T-cell (primary cell): ENCODE measurements at regions of chrX and their contacts with region 1.

Region 1: GRCh38 chrX:106919932-106920452 is at the start of gene CLDN2:
- DNase-seq: no peak
- ATAC-seq: no peak
- H3K4me3 ChIP-seq: no peak within 1 kb of the TSS
- H3K4me3 Mint-ChIP-seq: no peak within 1 kb of the TSS
- H3K27ac ChIP-seq: no peak within 1 kb of the TSS
- H3K27ac Mint-ChIP-seq: no peak within 1 kb of the TSS
- H3K4me1 ChIP-seq: peaks cover 0 to 15% of the 10 kb centered on the region in 2 experiments
- H3K4me1 Mint-ChIP-seq: peaks cover 20 to 26% (median 25%) of the 10 kb centered on the region in 3 donors
- H3K27me3 ChIP-seq: peaks cover 0 to under 1% of the 10 kb centered on the region in 2 experiments
- H3K27me3 Mint-ChIP-seq: peaks cover 6 to 11% of the 10 kb centered on the region in 2 donors
- total RNA-seq, gene CLDN2: 0.07 to 0.13 TPM in 2 of 5 donors, not detected in the others

Region 2: DNA sequence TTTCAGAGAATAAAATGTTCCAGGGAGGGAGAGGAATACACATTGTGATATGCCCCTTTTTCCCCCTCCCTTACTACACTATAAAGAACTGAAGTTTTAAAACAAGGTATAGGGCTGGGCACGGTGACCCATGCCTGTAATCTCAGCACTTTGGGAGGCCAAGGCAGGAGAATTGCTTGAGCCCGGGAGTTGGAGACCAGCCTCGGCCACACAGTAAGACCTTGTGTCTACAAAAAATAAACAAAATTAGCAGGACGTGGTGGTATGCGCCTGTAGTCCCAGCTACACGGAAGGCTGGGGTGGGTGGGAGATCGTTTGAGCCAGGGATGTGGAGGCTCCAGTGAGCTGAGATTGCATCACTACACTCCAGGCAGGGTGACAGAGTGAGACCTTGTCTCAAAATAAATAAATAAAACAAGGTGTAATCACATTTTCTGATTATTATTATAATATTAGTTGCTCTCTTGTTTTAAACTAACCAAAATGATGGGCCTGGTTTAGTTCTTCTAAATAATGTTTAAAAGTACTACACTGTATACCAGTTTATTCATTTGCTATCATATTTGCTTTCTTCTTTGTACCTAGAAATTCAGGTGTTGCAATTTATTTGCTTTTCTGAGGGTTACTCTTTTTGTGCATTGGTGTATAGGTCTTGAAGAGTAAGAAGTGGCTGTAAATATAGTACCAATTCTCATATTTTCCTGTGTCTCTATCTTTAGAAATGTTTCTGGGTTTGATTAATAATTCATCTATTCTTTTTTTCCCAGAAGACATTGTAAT is 108.7 kb before region 1 on chrX:
- CTCF ChIA-PET with region 1: no interaction called
- POLR2A ChIA-PET with region 1: no interaction called
- DNase-seq: no peak
- ATAC-seq: no peak
- H3K4me3 ChIP-seq: no peak overlapping the region
- H3K4me3 Mint-ChIP-seq: no peak overlapping the region
- H3K27ac ChIP-seq: no peak overlapping the region
- H3K27ac Mint-ChIP-seq: no peak overlapping the region
- H3K4me1 ChIP-seq: no peaks in the 10 kb centered on the region
- H3K4me1 Mint-ChIP-seq: no peaks in the 10 kb centered on the region
- H3K27me3 ChIP-seq: no peaks in the 10 kb centered on the region
- H3K27me3 Mint-ChIP-seq: peaks cover 4 to 36% of the 10 kb centered on the region in 2 donors

Region 3: DNA sequence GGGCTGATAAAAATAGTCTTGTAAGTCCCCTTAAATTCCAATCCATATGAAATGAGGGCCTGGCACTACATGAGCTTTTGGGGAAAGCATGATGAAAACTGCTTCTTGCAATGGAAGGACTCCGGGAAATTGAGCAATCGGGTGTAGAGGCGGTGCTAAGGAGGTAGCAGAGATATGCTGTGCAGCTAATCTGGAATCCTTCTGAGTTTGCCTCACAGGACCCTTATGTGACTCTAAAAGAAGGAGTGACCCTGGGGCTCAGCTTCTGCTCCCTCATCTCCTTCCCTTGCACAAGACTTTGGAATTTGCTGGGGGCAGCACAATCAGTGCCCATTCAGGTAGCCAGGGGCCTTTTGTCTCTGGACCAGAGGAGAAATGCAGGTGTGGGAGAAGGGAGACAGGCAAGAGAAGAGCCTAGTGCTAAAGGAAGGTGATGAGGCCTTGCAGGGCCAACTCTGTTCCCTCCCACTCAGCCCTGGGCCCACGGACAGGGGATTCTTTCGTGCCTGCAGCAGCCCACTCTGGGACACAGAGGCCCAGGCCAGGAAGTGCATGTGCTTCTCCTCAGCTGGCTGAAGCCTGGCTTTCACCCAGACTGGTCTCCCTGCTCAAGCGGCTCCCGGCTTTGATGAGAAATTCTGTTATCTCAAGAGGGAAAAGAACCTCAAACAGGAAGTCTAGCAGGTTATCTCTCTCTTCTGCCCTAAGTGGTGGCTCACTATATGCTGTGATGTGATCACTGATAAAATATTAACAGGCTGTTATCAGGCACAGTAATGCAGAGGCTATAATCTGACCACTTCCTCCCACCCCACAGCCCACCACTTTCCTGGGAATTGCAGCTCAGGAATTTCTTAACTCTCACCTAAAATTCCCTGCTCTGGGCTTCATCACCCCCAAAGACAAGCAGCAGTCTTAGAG is 13.3 kb after region 1 on chrX:
- CTCF ChIA-PET with region 1: no interaction called
- POLR2A ChIA-PET with region 1: interaction called in 1 of 2 experiments, 16 read pairs
- DNase-seq: no peak
- ATAC-seq: peak in 2 of 4 experiments; percentile 17 to 34
- H3K4me3 ChIP-seq: no peak overlapping the region
- H3K4me3 Mint-ChIP-seq: no peak overlapping the region
- H3K27ac ChIP-seq: no peak overlapping the region
- H3K27ac Mint-ChIP-seq: peak overlapping the region in 1 of 2 donors; percentile 23
- H3K4me1 ChIP-seq: peaks cover 0 to 9% of the 10 kb centered on the region in 2 experiments
- H3K4me1 Mint-ChIP-seq: peaks cover 0 to 16% (median 8%) of the 10 kb centered on the region in 3 donors
- H3K27me3 ChIP-seq: peaks cover 0 to 2% of the 10 kb centered on the region in 2 experiments
- H3K27me3 Mint-ChIP-seq: peaks cover 0 to 4% of the 10 kb centered on the region in 2 donors